ENCODE measurements at regions of chr12 and their contacts with region 1.

Region 1: DNA sequence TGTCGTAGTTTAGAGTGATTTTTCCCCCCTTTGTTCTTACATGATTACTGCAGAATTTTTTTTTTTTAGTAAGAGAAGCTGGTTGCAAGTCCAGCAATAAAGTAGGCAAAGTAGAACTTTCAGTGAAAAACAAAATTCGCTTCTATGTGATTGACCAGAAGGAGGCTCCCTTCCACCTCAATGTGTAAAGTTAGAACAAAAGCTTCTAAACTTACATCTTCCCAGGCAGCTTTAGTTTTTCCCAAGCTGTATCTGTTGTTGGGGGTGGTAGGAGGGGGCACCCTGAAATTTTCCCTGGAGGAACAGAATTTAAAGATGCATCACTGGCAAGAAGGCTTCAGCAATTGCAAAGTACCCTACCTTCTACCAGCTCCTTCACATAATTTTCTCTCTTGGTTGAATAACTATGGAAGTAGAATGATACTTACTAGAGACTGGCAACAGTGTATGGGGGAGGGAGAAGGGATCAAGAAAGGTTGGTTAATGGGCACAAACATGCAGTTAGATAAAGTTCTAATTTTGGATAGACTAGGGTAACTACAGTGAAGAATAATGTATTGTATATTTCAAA is 87.3 kb upstream of the E2F7 start:
- DNase-seq: peak; percentile 18
- ATAC-seq: no peak
- H3K4me3 ChIP-seq: no peak overlapping the region
- H3K27ac ChIP-seq: no peak overlapping the region
- H3K4me1 ChIP-seq: no peaks in the 10 kb centered on the region
- H3K27me3 ChIP-seq: no peaks in the 10 kb centered on the region
- CTCF ChIP-seq: peak; percentile 60

Region 2: GRCh38 chr12:76645934-76646333 is 506.8 kb before region 1 on chr12:
- CTCF ChIA-PET with region 1: no interaction called
- POLR2A ChIA-PET with region 1: no interaction called
- in situ Hi-C with region 1: no loop called
- intact Hi-C with region 1: no loop called
- DNase-seq: no peak
- ATAC-seq: no peak
- H3K4me3 ChIP-seq: no peak overlapping the region
- H3K27ac ChIP-seq: no peak overlapping the region
- H3K4me1 ChIP-seq: no peaks in the 10 kb centered on the region
- H3K27me3 ChIP-seq: no peaks in the 10 kb centered on the region
- CTCF ChIP-seq: no peak

Region 3: DNA sequence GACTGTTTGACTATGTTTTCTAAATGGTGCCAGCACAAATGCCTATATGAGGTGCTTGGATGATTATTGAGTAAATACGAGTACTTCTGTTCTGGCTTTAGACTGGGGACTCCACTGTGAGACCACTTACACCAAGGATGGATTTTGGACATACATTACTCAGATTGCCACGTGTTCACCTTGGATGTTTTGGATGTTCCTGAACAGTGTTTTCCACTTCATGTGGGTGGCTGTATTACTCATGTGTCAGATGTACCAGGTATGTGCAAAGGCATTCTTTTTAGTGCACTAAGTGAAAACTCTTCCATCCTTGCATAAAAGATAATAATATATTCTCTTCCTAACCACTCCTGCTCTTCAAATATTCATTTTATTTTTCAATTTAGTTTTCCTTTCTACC is 304.6 kb before region 1 on chr12:
- CTCF ChIA-PET with region 1: no interaction called
- POLR2A ChIA-PET with region 1: no interaction called
- in situ Hi-C with region 1: no loop called
- intact Hi-C with region 1: no loop called
- DNase-seq: no peak
- ATAC-seq: no peak
- H3K4me3 ChIP-seq: no peak overlapping the region
- H3K27ac ChIP-seq: no peak overlapping the region
- H3K4me1 ChIP-seq: no peaks in the 10 kb centered on the region
- H3K27me3 ChIP-seq: no peaks in the 10 kb centered on the region
- CTCF ChIP-seq: no peak

Region 4: DNA sequence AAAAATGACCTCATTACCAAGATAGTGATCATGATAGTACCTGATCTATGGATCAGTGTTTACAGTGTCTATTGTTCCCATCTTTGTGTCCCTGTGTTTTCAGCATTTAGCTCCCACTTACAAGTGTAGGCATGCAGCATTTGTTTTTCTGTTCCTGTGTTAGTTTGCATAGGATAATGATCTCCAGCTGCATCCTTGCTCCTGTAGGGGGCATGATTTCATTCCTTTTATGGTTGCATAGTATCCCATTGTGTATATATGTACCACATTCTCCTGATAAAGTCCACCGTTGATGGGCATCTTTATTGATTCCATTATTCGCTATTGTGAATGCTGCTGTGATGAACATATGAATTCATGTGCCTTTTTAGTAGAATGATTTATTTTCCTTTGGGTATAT is 462.6 kb after region 1 on chr12:
- CTCF ChIA-PET with region 1: interaction called, 21 read pairs
- POLR2A ChIA-PET with region 1: no interaction called
- in situ Hi-C with region 1: no loop called
- intact Hi-C with region 1: no loop called
- DNase-seq: no peak
- ATAC-seq: no peak
- H3K4me3 ChIP-seq: no peak overlapping the region
- H3K27ac ChIP-seq: no peak overlapping the region
- H3K4me1 ChIP-seq: no peaks in the 10 kb centered on the region
- H3K27me3 ChIP-seq: no peaks in the 10 kb centered on the region
- CTCF ChIP-seq: peak; percentile 9; the same call in 1 of the 2 replicates

Region 5: GRCh38 chr12:77685112-77685511 is 532.4 kb after region 1 on chr12:
- CTCF ChIA-PET with region 1: interaction called, 3 read pairs
- POLR2A ChIA-PET with region 1: no interaction called
- in situ Hi-C with region 1: no loop called
- intact Hi-C with region 1: loop called (anchors 2 kb)
- DNase-seq: peak; percentile 50
- ATAC-seq: peak; percentile 80
- H3K4me3 ChIP-seq: no peak overlapping the region
- H3K27ac ChIP-seq: no peak overlapping the region
- H3K4me1 ChIP-seq: no peaks in the 10 kb centered on the region
- H3K27me3 ChIP-seq: no peaks in the 10 kb centered on the region
- CTCF ChIP-seq: peak; percentile 75

Measured in Panc1 (cell line).